ENCODE measurements at regions of chr19 and their contacts with region 1.

Region 1: DNA sequence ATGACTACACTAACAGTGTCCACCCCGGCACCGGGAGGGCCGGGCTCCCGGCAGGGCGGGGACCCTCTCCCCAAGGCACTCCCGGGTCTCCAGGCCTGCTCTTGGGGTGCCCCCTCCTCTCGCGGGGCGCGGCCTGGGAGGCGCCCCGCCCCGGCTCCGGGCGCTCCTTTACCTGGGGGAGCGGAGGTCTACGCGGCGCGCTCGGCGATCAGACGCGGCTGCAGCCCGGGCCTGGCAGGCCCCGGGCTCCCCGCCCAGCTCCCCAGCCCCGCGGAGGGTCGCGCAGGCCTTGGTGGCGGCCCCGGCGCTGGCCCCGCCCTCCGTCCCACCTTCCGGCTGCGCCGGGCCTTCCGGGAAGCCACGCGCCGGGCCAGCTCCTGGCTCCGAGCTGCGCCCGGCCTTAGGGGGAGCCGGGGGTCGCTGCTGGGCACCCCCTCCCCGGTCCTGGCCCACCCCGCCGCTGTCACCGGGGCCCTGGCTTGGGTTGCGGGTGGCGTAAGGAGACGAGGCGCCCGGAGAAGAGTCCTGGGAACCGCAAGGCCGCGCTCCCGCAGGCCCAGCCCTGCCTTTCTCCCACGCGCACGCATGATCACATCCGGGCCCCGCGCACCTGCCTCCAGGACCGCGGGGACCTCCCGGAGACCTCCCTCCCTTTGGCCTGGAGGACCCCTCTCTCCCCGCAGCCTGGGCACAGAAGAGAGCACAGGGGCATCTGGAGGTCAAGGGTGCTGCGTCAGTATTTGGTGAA is at the start of gene C19orf12:
- DNase-seq: peak; percentile 75
- H3K4me3 Mint-ChIP-seq: peak within 1 kb of the TSS; percentile 84
- H3K27ac Mint-ChIP-seq: peak within 1 kb of the TSS; percentile 93
- H3K4me1 Mint-ChIP-seq: peaks cover 50% of the 10 kb centered on the region
- H3K27me3 Mint-ChIP-seq: no peaks in the 10 kb centered on the region
- total RNA-seq, gene C19orf12: 39.2 to 40.7 TPM

Region 2: GRCh38 chr19:29610563-29611271 is 104.4 kb before region 1 on chr19:
- CTCF ChIA-PET with region 1: interaction called, 178 read pairs
- POLR2A ChIA-PET with region 1: interaction called, 143 read pairs
- DNase-seq: peak; percentile 88
- H3K4me3 Mint-ChIP-seq: no peak overlapping the region
- H3K27ac Mint-ChIP-seq: peak overlapping the region; percentile 9
- H3K4me1 Mint-ChIP-seq: peaks cover 37% of the 10 kb centered on the region
- H3K27me3 Mint-ChIP-seq: no peaks in the 10 kb centered on the region

Region 3: GRCh38 chr19:29665215-29665825 is 49.8 kb before region 1 on chr19 and contains the start of gene PLEKHF1:
- CTCF ChIA-PET with region 1: interaction called, 97 read pairs
- POLR2A ChIA-PET with region 1: interaction called, 111 read pairs
- DNase-seq: peak; percentile 90
- H3K4me3 Mint-ChIP-seq: peak within 1 kb of the TSS; percentile 94
- H3K27ac Mint-ChIP-seq: peak within 1 kb of the TSS; percentile 97
- H3K4me1 Mint-ChIP-seq: peaks cover 63% of the 10 kb centered on the region
- H3K27me3 Mint-ChIP-seq: peaks cover 1% of the 10 kb centered on the region
- total RNA-seq, gene PLEKHF1: 53.1 to 53.9 TPM

Region 4: DNA sequence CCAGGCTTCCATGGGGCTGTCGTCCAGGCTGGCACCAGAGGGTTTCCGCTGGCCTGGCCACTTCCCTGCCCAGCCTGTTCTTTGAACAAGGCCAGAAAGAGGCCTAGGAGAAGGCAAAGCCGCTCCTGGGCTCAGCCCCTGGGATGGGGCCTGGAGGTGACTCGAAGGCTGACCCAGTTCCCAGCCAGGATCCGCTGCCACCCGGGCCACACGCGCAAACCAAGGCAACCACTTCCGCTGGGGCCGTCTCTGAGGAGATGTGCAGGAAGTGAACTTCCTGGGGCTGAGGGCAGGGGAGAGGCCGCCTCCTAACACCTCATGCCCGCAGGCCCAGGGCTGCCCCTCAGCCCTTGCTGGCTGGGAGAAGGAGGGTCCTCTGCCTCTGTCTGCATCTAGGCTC is 34.7 kb before region 1 on chr19:
- CTCF ChIA-PET with region 1: interaction called, 7 read pairs
- POLR2A ChIA-PET with region 1: interaction called, 108 read pairs
- DNase-seq: peak; percentile 93
- H3K4me3 Mint-ChIP-seq: peak overlapping the region; percentile 56
- H3K27ac Mint-ChIP-seq: peak overlapping the region; percentile 88
- H3K4me1 Mint-ChIP-seq: peaks cover 63% of the 10 kb centered on the region
- H3K27me3 Mint-ChIP-seq: no peaks in the 10 kb centered on the region

Region 5: DNA sequence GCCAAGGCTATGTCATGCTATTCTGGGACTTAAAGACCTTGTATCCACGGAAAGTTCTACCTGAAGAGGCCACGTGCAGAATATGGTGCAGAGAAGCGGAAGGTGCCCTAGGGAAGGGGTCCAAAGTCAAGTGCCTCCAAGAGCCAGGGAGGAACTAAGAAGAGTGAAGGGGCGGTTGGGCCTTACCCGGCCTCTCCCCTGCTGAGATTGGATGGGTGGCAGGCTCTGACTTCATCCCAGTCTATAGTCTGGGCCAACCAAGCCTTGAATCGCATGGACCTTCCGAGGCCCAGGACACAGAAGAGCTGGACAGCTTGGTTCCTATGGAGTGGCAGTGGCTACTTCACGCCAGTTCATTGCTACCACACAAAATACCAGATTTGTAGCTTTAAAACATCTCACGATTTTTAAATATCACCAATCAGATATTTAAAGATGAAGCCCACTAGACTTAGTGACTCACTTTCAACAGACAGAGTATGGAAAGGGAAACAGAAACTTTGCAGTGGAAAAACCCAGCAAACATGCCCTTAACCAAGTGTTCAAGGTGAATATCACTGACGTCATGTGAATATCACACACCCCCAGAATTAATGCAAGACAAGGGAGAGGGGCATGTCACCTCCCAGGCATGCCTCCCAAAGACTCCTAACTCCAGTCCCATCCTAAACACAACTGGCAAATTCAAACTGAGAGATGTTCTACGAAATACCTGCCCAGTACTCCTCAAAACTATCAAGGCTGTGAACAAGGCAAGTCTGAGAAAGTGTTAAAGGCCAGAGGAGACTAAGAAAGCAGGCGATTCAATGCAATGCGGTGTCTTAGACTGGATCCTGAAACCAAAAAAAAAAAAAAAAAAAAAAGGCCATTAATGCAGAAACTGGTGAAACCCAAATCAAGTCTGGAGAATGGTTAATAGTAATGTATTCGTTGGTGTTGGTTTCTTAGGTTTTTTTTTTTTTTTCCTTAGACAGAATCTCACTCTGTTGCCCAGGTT is 10.3 kb before region 1 on chr19:
- CTCF ChIA-PET with region 1: interaction called, 15 read pairs
- POLR2A ChIA-PET with region 1: interaction called, 26 read pairs
- DNase-seq: no peak
- H3K4me3 Mint-ChIP-seq: no peak overlapping the region
- H3K27ac Mint-ChIP-seq: peak overlapping the region; percentile 82
- H3K4me1 Mint-ChIP-seq: peaks cover 41% of the 10 kb centered on the region
- H3K27me3 Mint-ChIP-seq: no peaks in the 10 kb centered on the region

Region 6: GRCh38 chr19:29858000-29858596 is 143.0 kb after region 1 on chr19:
- CTCF ChIA-PET with region 1: interaction called, 11 read pairs
- POLR2A ChIA-PET with region 1: no interaction called
- DNase-seq: peak; percentile 53
- H3K4me3 Mint-ChIP-seq: no peak overlapping the region
- H3K27ac Mint-ChIP-seq: no peak overlapping the region
- H3K4me1 Mint-ChIP-seq: no peaks in the 10 kb centered on the region
- H3K27me3 Mint-ChIP-seq: peaks cover 6% of the 10 kb centered on the region